SK-N-SH (cell line): ENCODE measurements at regions of chr2 and their contacts with region 1.

Region 1: DNA sequence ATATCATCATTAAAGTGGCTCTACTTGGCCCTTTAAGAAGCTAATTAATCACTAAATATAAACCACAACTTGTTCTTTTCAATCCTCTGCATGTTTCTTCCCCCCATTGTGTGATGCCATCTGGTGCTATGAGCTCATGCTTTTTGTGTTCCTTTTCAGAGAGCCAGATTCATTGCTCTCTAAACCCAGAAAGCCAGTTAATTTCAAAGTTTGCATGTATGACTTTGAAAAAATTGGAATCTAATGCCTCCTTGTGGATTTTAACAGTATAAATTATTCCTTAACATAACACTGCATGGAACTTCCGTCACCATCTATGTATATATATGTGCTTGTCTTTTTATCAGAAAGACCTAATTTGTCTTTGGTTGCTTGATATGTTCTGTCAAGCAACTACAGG is 31.1 kb downstream of the TMEM178A start:
- DNase-seq: peak; percentile 28
- H3K4me3 ChIP-seq: no peak overlapping the region
- H3K27ac ChIP-seq: no peak overlapping the region
- H3K4me1 ChIP-seq: peaks cover 0 to 6% of the 10 kb centered on the region in 2 experiments; a peak in 1 of 4 replicates
- H3K27me3 ChIP-seq: no peaks in the 10 kb centered on the region
- CTCF ChIP-seq: peak; percentile 68
- EP300 ChIP-seq: no peak
- RAD21 ChIP-seq: peak; percentile 79

Region 2: GRCh38 chr2:38709567-38710194 is 987.2 kb before region 1 on chr2:
- CTCF ChIA-PET with region 1: no interaction called
- POLR2A ChIA-PET with region 1: no interaction called
- DNase-seq: no peak
- H3K4me3 ChIP-seq: no peak overlapping the region
- H3K27ac ChIP-seq: no peak overlapping the region
- H3K4me1 ChIP-seq: no peaks in the 10 kb centered on the region
- H3K27me3 ChIP-seq: no peaks in the 10 kb centered on the region
- CTCF ChIP-seq: no peak
- EP300 ChIP-seq: no peak
- RAD21 ChIP-seq: no peak

Region 3: GRCh38 chr2:39640107-39640506 is 56.7 kb before region 1 on chr2:
- CTCF ChIA-PET with region 1: no interaction called
- POLR2A ChIA-PET with region 1: no interaction called
- DNase-seq: no peak
- H3K4me3 ChIP-seq: no peak overlapping the region
- H3K27ac ChIP-seq: no peak overlapping the region
- H3K4me1 ChIP-seq: no peaks in the 10 kb centered on the region; a peak in 3 of 4 replicates
- H3K27me3 ChIP-seq: no peaks in the 10 kb centered on the region
- CTCF ChIP-seq: no peak
- EP300 ChIP-seq: no peak
- RAD21 ChIP-seq: no peak

Region 4: DNA sequence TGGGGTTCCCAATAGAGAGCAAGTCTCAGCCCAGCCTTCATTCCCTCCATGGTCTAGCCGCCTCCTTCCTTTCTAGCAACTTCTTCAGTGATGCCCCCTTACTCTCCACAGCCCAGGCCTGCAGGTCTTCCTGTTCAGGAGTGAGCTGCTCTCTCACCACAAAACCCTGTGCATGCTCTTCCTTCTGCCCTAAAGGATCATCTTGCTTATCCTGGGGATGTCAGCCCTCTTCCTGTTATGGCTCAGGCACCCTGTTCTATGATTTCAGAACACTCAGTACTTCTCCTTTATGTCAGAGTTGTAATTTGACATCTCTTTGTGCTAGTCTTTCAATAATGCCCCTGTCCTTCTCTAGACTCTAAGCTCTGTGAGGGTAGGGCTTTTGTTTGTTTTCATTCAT is 11.7 kb before region 1 on chr2:
- CTCF ChIA-PET with region 1: interaction called, 17 read pairs
- POLR2A ChIA-PET with region 1: no interaction called
- DNase-seq: no peak
- H3K4me3 ChIP-seq: no peak overlapping the region
- H3K27ac ChIP-seq: no peak overlapping the region
- H3K4me1 ChIP-seq: peaks cover 0 to 4% of the 10 kb centered on the region in 2 experiments; a peak in 2 of 4 replicates
- H3K27me3 ChIP-seq: no peaks in the 10 kb centered on the region; the same call in 1 of the 2 replicates
- CTCF ChIP-seq: no peak
- EP300 ChIP-seq: no peak
- RAD21 ChIP-seq: no peak